Heart right ventricle (tissue), 16 donors: ENCODE measurements at regions of chr1 and their contacts with region 1.

Region 1: DNA sequence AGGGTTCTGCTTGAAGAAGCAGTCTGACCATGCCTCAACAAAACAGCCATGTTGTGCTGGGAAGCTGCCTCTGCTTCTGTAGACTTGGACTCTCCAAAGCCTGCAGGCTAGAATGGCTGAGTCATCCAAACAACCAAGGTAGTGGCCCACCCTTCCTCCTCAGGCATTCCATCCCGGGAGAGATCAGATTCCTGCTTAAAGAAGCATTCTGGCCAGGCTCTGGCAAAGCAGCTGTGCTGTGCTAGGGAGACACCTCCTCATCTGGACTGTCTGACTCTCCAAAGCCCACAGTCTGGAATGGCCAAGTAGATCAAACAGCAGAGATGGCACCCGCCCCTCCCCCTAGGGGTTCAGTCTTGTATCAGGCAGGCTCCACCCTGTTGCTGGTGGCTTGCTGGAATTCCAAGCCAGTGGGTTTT is 38.3 kb upstream of the F3 start:
- DNase-seq: no peak
- ATAC-seq: no peak
- H3K4me3 ChIP-seq: no peak overlapping the region
- H3K27ac ChIP-seq: no peak overlapping the region
- H3K4me1 ChIP-seq: no peaks in the 10 kb centered on the region
- H3K27me3 ChIP-seq: no peaks in the 10 kb centered on the region
- CTCF ChIP-seq: no peak

Region 2: DNA sequence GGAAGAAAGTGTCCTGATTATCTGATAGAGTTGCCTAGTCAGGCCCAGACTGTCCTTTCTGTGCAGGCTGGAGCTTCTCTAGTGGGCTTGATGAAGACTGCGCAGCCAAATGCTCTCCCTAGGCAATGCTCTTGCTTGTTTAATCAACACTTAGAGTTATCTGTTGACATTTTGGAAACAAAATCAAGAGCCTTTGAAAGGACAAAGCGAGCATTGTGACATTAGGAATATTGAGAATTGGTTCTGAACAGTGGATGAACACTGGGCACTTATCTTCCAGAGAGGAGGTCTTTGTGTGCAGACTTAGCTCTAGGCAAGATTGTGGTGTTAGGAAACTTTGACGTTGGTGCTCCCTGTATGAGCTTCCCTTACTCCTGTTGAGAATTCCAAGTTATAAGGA is 795.3 kb before region 1 on chr1:
- intact Hi-C with region 1: loop called in 1 of 10 experiments (anchors 5 kb)
- DNase-seq: no peak
- ATAC-seq: no peak
- H3K4me3 ChIP-seq: no peak overlapping the region
- H3K27ac ChIP-seq: no peak overlapping the region
- H3K4me1 ChIP-seq: no peaks in the 10 kb centered on the region
- H3K27me3 ChIP-seq: no peaks in the 10 kb centered on the region
- CTCF ChIP-seq: no peak